ENCODE measurements at regions of chr11 and their contacts with region 1.

Region 1: GRCh38 chr11:36312611-36313472 is 16.8 kb downstream of the PRR5L start:
- DNase-seq: no peak
- H3K4me3 Mint-ChIP-seq: no peak overlapping the region
- H3K27ac Mint-ChIP-seq: no peak overlapping the region
- H3K4me1 Mint-ChIP-seq: peaks cover 10% of the 10 kb centered on the region
- H3K27me3 Mint-ChIP-seq: peaks cover 42% of the 10 kb centered on the region

Region 2: GRCh38 chr11:36343436-36343835 is 30.6 kb after region 1 on chr11:
- intact Hi-C with region 1: loop called (anchors 1 kb)
- DNase-seq: no peak
- H3K4me3 Mint-ChIP-seq: no peak overlapping the region
- H3K27ac Mint-ChIP-seq: no peak overlapping the region
- H3K4me1 Mint-ChIP-seq: peaks cover 27% of the 10 kb centered on the region
- H3K27me3 Mint-ChIP-seq: peaks cover 40% of the 10 kb centered on the region

Region 3: DNA sequence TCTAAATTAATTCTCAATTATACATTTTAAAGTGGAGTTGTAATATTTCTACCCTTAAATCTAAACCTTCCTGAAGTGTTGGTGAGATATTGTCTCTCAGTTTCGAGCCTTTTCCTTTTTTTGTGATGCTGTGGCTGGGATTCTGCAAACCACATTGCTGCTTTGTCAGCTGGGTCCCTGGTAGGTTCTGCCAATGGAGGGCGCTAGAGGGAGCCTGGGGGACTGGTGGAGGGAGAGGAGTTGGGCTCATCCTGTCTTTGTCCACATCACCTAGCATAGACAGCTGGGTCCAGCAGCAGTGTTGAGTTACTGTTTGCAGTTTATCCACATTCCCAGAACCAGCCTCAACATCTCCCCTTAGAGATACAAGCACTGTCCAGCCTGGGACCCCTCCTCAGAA is 156.2 kb after region 1 on chr11:
- intact Hi-C with region 1: no loop called
- DNase-seq: no peak
- H3K4me3 Mint-ChIP-seq: no peak overlapping the region
- H3K27ac Mint-ChIP-seq: no peak overlapping the region
- H3K4me1 Mint-ChIP-seq: peaks cover 5% of the 10 kb centered on the region
- H3K27me3 Mint-ChIP-seq: no peaks in the 10 kb centered on the region

Measured in activated T-helper 1 cell treated with anti-CD3 and anti-CD28 coated beads, Interleukin-12 subunit alpha, Interleukin-12 subunit beta, Interleukin-2, Interleukin-4 antibody, amounts not matched to agents 30 ng/mL and 10 ng/mL and 1 ng/mL, durations not matched to agents 14 hours and 24 hours and 36 hours (primary cell).